Esophagus squamous epithelium (tissue), 5 donors: ENCODE measurements at regions of chr9 and their contacts with region 1.

Region 1: GRCh38 chr9:98998441-98999151 is 54.9 kb downstream of the COL15A1 start:
- DNase-seq: no peak
- H3K4me3 ChIP-seq: peak overlapping the region in 1 of 4 donors; percentile 23
- H3K27ac ChIP-seq: peak overlapping the region; percentile 36 to 88 (median 76)
- H3K4me1 ChIP-seq: peaks cover 7 to 48% (median 17%) of the 10 kb centered on the region in 3 donors
- H3K27me3 ChIP-seq: peaks cover 0 to 6% (median 0%) of the 10 kb centered on the region in 4 donors
- CTCF ChIP-seq: peak; percentile 71 to 89 (median 82)
- POLR2A ChIP-seq: no peak

Region 2: DNA sequence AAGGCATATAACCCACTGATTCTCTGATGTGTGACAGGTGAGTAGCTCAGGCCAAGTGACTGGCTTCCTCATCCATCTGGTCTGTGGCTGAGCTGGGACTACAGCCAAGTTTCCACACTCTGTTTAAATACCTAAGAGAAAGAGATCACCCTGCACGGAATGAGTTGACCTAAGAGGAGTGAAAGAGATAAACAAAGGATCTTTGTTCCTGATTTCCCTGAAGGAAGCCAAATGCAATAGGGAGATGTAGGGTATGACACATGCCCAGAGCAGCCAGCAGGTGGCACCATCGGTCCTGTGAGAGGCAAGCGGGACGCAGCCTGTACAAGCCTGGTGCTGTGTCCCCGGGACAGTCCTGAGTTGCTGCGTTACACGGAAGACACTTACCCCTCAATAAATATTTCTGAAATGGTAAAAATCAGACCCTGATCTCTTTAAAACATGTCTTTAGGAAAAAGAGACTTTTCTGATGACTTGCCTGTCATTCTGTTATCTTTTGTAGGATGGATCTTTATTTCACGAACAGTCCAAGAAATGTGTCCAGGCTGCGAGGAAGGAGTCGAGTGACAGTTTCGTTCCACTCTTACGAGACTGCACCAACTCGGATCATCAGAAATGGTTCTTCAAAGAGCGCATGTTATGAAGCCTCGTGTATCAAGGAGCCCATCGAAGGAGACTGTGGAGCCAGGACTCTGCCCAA is 150.0 kb before region 1 on chr9:
- intact Hi-C with region 1: loop called (anchors 5 kb)
- DNase-seq: peak; percentile 21
- H3K4me3 ChIP-seq: peak overlapping the region in 3 of 4 donors; percentile 14 to 47 (median 33)
- H3K27ac ChIP-seq: peak overlapping the region in 3 of 4 donors; percentile 63 to 68 (median 66)
- H3K4me1 ChIP-seq: peaks cover 0 to 18% (median 0%) of the 10 kb centered on the region in 3 donors
- H3K27me3 ChIP-seq: no peaks in the 10 kb centered on the region
- CTCF ChIP-seq: peak; percentile 77 to 88 (median 86)
- POLR2A ChIP-seq: no peak

Region 3: DNA sequence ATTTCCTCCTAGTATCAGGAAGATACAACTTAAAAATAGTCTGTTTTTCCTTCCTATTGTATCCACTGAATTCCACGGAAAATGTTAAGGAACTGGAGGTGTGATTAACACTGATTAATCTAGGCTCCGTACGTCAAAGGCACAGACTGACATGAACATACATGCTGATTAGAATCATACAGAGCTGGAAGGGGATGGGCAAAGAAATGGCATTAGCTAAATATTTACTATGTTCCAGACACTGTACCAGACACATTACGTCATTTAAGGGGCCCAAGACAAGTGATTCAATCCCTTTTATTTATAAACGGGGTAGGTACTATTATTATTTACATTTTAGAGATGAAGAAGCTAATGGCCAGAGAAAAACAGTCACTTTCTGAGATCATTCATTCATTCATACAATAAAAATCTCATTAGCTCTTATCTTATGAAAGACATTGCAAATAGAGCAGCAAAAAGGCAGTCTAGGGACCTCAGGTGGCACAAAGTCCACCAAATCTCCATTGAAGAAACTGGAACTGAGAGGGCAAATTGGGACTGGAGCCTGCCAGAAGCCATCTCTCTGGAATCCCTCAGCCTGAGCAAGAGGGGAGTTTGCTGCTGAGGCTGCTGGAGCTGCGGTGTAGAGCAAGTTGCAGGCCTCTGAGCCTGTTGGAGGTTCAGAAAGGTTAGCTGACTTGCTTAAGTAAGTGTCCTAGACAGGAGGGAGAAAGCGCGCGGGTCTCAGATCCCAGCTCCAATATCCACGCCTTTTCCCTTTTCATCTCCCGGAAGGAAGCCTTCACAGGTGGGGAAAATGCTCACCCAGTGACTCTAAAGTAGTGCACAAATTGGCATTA is 104.7 kb after region 1 on chr9:
- intact Hi-C with region 1: no loop called
- DNase-seq: no peak
- H3K4me3 ChIP-seq: peak overlapping the region in 3 of 4 donors; percentile 76 to 92 (median 78)
- H3K27ac ChIP-seq: peak overlapping the region; percentile 91 to 99 (median 96)
- H3K4me1 ChIP-seq: peaks cover 27 to 55% (median 27%) of the 10 kb centered on the region in 3 donors
- H3K27me3 ChIP-seq: no peaks in the 10 kb centered on the region
- CTCF ChIP-seq: no peak
- POLR2A ChIP-seq: no peak

Region 4: DNA sequence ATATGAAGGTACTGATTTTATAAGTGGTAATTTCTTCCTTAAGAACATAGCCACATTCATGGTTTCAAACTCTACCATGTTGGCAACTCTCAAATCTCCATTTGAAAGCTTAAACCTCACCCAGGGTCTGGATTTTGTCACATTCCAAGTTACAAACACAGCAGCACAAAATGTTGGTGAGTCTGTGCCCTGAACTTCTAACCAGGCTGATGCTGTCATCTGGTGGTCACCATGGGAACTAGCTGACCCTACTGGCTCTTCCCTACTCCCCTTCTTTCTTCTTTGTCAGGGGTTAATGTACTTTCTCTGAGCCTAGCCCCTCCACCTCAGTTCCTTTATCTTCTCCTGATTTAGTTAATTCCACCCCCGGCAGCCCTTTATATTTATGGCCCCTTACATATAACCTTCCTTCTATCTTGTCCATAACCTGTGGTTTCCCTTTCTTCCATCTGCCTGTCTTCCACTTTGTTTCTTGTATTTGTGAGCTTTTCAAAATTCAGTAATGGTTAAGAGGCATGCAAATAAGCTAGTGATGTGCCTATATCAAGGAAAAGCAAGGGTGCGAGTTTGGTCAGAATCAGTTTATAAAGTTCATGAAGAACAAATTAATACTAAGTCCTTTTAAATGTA is 142.2 kb after region 1 on chr9:
- intact Hi-C with region 1: loop called (anchors 5 kb)
- DNase-seq: no peak
- H3K4me3 ChIP-seq: no peak overlapping the region
- H3K27ac ChIP-seq: no peak overlapping the region
- H3K4me1 ChIP-seq: peaks cover 0 to 11% (median 0%) of the 10 kb centered on the region in 3 donors
- H3K27me3 ChIP-seq: no peaks in the 10 kb centered on the region
- CTCF ChIP-seq: peak; percentile 69 to 89 (median 75)
- POLR2A ChIP-seq: no peak